CD4-positive, alpha-beta T cell (primary cell): ENCODE measurements at regions of chr15 and their contacts with region 1.

Region 1: GRCh38 chr15:80052597-80053300 is 6.7 kb upstream of the ZFAND6 start:
- DNase-seq: no peak
- ATAC-seq: no peak
- H3K4me3 ChIP-seq: no peak overlapping the region
- H3K4me3 Mint-ChIP-seq: no peak overlapping the region
- H3K27ac ChIP-seq: no peak overlapping the region
- H3K27ac Mint-ChIP-seq: no peak overlapping the region
- H3K4me1 ChIP-seq: no peaks in the 10 kb centered on the region
- H3K4me1 Mint-ChIP-seq: no peaks in the 10 kb centered on the region
- H3K27me3 ChIP-seq: no peaks in the 10 kb centered on the region
- H3K27me3 Mint-ChIP-seq: peaks cover 3% of the 10 kb centered on the region
- CTCF ChIP-seq: no peak

Region 2: DNA sequence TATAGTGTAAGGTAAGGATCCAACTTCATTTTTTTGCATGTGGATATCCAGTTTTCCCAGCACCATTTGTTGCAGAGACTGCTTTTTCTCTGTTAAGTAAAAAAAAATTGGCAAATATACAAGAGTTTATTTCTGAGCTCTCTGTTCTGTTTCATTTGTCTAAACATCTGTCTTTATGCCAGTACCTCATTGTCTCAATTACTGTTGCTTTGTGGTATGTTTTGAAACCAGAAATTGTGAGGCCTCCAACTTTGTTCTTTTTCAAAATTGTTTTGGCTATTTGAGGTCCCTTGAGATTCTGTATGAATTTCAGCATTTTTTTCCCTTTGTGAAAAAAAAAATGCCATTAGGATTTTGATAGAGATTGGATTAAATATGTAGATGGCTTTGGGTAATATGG is 470.1 kb before region 1 on chr15:
- CTCF ChIA-PET with region 1: no interaction called
- POLR2A ChIA-PET with region 1: no interaction called
- intact Hi-C with region 1: no loop called
- DNase-seq: no peak
- ATAC-seq: no peak
- H3K4me3 ChIP-seq: no peak overlapping the region
- H3K4me3 Mint-ChIP-seq: no peak overlapping the region
- H3K27ac ChIP-seq: no peak overlapping the region
- H3K27ac Mint-ChIP-seq: no peak overlapping the region
- H3K4me1 ChIP-seq: no peaks in the 10 kb centered on the region
- H3K4me1 Mint-ChIP-seq: no peaks in the 10 kb centered on the region
- H3K27me3 ChIP-seq: peaks cover 0 to 15% of the 10 kb centered on the region in 2 experiments
- H3K27me3 Mint-ChIP-seq: peaks cover 54% of the 10 kb centered on the region
- CTCF ChIP-seq: no peak

Region 3: DNA sequence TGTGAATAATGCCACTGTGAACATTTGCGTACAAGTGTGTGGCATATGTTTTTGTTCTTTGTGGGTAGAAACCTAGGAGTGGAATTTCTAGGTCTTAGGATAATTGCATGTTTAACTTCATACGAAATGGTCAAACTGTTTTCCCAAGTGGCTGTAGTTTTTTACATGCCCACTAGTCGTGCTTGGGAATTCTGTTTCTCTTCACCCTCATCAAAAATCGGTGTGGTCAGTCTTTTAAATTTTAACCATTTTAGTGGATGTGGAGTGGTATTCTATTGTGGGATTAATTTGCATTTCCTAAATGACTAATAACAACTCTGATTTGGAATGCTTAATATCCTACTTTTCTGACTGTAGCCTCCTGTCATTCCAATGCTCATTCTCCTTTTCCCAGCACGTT is 34.4 kb after region 1 on chr15:
- CTCF ChIA-PET with region 1: no interaction called
- POLR2A ChIA-PET with region 1: no interaction called
- intact Hi-C with region 1: loop called in 1 of 2 experiments (anchors 5 kb)
- DNase-seq: no peak
- ATAC-seq: no peak
- H3K4me3 ChIP-seq: no peak overlapping the region
- H3K4me3 Mint-ChIP-seq: no peak overlapping the region
- H3K27ac ChIP-seq: no peak overlapping the region
- H3K27ac Mint-ChIP-seq: no peak overlapping the region
- H3K4me1 ChIP-seq: peaks cover 4% of the 10 kb centered on the region
- H3K4me1 Mint-ChIP-seq: peaks cover 69% of the 10 kb centered on the region
- H3K27me3 ChIP-seq: no peaks in the 10 kb centered on the region
- H3K27me3 Mint-ChIP-seq: no peaks in the 10 kb centered on the region
- CTCF ChIP-seq: no peak

Region 4: DNA sequence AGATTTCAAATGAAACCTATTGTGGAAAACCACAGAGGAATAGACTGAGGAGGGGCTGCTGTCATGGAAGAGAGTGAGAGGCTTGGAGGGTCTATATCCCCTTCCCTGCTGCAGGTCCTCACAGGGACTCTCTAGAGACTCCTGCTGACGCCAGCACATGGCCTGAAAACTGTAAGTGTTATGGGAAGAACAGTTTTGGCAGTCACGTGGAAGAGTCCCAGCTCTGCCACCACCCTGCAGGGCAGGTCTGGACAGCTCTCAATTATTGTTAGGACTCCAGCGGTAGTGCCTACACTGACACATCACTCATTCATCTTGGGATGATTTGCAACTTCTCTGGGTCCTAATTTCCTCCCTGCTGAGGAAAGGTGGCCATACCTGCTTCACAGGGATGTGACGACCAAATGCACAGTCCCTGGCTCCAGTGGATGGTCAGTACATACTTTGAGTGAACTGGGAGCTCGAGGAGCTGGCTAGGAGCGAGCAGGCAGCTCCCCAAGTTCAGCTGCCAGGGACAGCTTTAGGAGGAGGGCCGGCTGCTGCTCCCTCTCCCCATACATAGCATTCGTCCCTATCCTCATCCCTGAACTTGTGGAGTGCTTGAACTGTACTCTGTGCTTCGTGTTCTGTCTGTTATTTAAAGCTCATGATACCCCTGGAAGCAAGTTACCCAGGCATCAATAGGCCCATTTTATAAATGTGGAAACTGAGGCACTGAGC is 150.1 kb after region 1 on chr15:
- CTCF ChIA-PET with region 1: no interaction called
- POLR2A ChIA-PET with region 1: no interaction called
- intact Hi-C with region 1: no loop called
- DNase-seq: no peak
- ATAC-seq: no peak
- H3K4me3 ChIP-seq: no peak overlapping the region
- H3K4me3 Mint-ChIP-seq: no peak overlapping the region
- H3K27ac ChIP-seq: no peak overlapping the region
- H3K27ac Mint-ChIP-seq: no peak overlapping the region
- H3K4me1 ChIP-seq: no peaks in the 10 kb centered on the region
- H3K4me1 Mint-ChIP-seq: no peaks in the 10 kb centered on the region
- H3K27me3 ChIP-seq: peaks cover 0 to 4% of the 10 kb centered on the region in 2 experiments
- H3K27me3 Mint-ChIP-seq: peaks cover 34% of the 10 kb centered on the region
- CTCF ChIP-seq: no peak